Aorta (tissue), 5 donors: ENCODE measurements at regions of chr21 and their contacts with region 1.

Region 1: DNA sequence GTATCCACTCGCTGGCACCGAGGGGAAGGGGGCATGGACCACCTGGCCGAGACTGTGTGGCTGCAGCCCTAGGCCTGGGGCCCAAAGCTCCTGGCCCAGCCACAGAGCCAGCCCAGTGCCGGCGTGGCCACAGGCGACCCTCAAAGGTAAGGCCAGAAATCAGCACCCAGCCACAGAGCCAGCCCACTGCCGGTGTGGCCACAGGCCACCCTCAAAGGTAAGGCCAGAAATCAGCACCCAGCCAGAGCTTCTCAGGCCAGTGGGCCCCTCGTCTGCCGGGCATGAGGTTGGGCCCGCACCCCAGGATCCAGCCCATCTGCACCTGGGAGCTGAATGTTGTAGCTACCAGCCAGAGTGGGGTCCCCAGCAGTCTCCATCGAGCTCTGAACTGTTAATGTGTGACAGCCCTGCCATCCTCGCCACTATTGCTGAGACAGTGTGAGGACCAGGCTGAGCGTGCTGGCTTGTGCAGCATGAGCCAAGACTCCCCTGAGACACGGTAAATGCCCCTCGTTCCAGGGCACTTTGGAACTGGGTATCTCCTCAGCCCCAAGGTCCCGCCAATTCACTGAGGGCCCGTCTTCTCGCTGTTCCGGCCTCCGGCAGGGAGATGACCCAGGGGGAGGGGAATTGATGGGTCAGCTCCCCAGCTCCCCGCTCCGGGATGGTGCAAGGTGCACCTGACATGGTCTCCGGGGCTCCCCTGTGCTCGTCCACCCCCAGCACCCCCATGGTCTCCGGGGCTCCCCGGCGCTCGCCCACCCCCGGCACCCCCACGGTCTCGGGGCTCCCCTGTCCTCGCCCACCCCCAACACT is 4.7 kb upstream of the FTCD start:
- DNase-seq: peak; percentile 42 to 67
- ATAC-seq: no peak
- H3K4me3 ChIP-seq: no peak overlapping the region
- H3K27ac ChIP-seq: no peak overlapping the region
- H3K4me1 ChIP-seq: no peaks in the 10 kb centered on the region
- H3K27me3 ChIP-seq: no peaks in the 10 kb centered on the region

Region 2: GRCh38 chr21:46207006-46207981 is 47.2 kb after region 1 on chr21:
- intact Hi-C with region 1: loop called in 1 of 2 experiments (anchors 5 kb)
- DNase-seq: peak; percentile 38 to 63
- ATAC-seq: no peak
- H3K4me3 ChIP-seq: no peak overlapping the region
- H3K27ac ChIP-seq: no peak overlapping the region
- H3K4me1 ChIP-seq: no peaks in the 10 kb centered on the region
- H3K27me3 ChIP-seq: no peaks in the 10 kb centered on the region

Region 3: DNA sequence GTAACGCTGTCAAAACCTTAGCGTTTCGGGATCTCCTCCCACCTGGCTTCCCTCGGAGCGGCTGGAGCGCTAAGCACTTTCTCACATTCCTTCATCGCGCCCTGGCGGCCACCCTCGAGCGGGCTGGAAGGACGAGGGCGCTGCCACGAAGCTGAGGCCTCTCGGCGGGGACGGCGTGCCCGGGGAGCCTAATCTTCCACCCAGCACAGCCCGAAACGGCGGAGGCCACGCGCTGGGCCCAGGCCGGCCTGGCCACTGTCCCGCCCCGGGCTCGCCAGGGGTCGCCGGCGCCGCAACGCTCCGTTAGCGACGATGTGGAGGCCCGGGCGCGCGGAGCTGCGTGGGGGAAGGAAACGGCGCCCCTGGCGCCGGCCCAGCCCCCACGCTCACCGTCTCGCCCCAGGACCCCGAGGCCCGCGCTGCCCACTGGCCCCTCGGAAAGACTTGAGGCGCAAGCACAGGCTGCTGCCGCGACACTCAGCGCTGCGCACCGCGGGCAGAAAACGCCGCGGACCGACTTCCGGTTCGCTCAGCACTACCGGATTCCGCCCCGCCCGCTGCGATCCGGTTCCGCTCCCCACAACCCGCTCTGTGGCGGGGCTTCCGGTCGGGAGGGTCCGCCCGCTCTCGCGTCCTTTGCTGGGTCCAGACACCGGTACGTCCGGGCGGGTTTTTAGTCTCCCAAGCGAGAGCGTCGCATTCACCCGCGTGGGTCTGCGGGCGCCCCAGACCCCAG is 125.9 kb after region 1 on chr21 and contains the start of gene YBEY:
- intact Hi-C with region 1: no loop called
- DNase-seq: peak; percentile 94 to 96
- ATAC-seq: peak; percentile 97
- H3K4me3 ChIP-seq: peak within 1 kb of the TSS; percentile 63 to 92
- H3K27ac ChIP-seq: peak within 1 kb of the TSS in 1 of 2 donors; percentile 93
- H3K4me1 ChIP-seq: peaks cover 0 to 7% of the 10 kb centered on the region in 2 donors
- H3K27me3 ChIP-seq: no peaks in the 10 kb centered on the region
- total RNA-seq, gene YBEY: 7.7 to 11.3 TPM